Activated T-helper 1 cell treated with anti-CD3 and anti-CD28 coated beads, Interleukin-12 subunit alpha, Interleukin-12 subunit beta, Interleukin-2, Interleukin-4 antibody, amounts not matched to agents 30 ng/mL and 10 ng/mL and 1 ng/mL, durations not matched to agents 14 hours and 24 hours and 36 hours (primary cell): ENCODE measurements at regions of chr3 and their contacts with region 1.

Region 1: GRCh38 chr3:4350789-4351163 is 47.6 kb downstream of the SETMAR start:
- DNase-seq: peak; percentile 37
- H3K4me3 Mint-ChIP-seq: peak overlapping the region; percentile 9
- H3K27ac Mint-ChIP-seq: peak overlapping the region; percentile 31
- H3K4me1 Mint-ChIP-seq: peaks cover 20% of the 10 kb centered on the region
- H3K27me3 Mint-ChIP-seq: peaks cover 4% of the 10 kb centered on the region

Region 2: DNA sequence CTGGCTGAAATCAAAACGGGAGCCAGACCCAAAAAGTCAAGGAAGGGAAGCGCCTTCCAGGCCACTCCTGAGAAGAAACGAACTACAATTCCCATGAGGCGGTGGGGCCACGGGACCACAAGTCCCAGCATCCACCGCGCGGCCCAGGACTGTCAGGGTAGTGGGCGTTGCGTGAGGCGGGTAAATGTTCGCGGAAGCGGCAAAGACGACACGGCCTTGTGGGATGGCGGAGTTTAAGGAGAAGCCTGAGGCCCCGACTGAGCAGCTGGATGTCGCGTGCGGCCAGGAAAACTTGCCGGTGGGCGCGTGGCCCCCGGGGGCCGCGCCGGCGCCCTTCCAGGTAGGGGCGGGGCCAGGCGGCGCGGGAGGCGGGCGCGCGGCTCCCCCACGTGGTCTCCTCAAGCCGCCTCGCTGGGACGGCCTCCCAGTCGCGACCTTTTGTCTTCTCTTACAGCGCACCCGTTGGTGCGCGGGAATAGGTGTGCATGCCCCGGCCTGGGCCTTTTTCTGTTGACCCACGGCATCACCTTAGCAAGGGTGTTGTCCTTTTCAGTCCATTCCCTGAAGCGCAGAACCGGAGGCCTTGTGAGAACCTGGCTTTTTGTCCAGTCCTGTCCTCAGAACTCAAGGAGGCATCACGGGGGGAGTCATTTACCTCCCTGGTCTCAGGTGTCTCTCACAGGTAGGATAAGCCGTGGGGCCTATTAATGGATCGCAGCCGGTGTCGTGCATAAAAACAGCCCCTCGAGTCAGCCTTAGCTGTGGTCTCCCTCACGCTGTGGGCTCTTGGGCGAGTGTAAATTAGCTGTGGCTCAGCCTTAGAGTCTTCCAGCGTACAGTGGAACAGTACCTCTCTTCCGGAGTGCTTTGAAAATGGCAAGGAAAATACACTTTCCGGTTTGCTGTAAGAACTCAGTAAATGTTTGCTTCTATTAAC is 47.3 kb before region 1 on chr3 and contains the start of gene SETMAR:
- intact Hi-C with region 1: loop called (anchors 2 kb)
- DNase-seq: peak; percentile 75
- H3K4me3 Mint-ChIP-seq: peak within 1 kb of the TSS; percentile 93
- H3K27ac Mint-ChIP-seq: peak within 1 kb of the TSS; percentile 99
- H3K4me1 Mint-ChIP-seq: peaks cover 23% of the 10 kb centered on the region
- H3K27me3 Mint-ChIP-seq: no peaks in the 10 kb centered on the region
- total RNA-seq, gene SETMAR: 17.8 and 18.7 TPM in 2 replicates

Region 3: DNA sequence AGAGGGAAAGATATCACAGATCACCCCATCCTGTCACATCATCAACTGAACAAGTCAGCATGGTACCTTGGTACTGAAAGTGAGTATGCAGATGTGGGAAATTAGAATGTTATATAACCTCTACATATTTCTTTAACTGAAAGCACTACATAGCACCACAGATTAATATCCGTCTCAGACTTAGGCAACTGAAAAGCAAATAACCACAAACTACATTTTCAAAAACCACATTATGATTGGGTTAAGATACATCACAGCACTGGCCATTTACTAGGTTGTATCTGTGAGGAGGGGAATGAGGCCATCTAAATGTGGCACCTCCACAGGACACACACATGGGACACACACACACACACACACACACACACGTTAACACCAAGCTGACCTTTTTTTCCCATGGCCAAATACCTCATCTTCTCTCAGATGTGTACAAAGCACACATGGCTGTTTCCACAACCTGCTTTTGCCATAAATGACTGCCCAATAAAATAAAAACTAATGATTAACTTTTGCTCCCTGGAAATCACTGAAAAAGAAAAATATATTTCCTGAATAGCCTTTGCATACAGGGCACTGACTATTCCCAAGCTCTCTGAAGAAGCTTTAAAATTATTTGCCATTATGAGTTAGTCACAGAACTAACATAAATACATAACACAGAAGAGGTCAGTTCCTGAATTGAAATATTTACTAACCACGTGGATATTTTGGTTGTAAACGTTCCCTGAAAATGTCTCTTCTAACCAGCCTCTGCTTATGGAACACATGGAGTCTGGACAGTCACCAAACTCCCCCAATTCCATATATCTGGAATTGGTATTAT is 56.2 kb after region 1 on chr3:
- intact Hi-C with region 1: loop called (anchors 1 kb)
- DNase-seq: no peak
- H3K4me3 Mint-ChIP-seq: no peak overlapping the region
- H3K27ac Mint-ChIP-seq: no peak overlapping the region
- H3K4me1 Mint-ChIP-seq: peaks cover 57% of the 10 kb centered on the region
- H3K27me3 Mint-ChIP-seq: peaks cover 1% of the 10 kb centered on the region

Region 4: DNA sequence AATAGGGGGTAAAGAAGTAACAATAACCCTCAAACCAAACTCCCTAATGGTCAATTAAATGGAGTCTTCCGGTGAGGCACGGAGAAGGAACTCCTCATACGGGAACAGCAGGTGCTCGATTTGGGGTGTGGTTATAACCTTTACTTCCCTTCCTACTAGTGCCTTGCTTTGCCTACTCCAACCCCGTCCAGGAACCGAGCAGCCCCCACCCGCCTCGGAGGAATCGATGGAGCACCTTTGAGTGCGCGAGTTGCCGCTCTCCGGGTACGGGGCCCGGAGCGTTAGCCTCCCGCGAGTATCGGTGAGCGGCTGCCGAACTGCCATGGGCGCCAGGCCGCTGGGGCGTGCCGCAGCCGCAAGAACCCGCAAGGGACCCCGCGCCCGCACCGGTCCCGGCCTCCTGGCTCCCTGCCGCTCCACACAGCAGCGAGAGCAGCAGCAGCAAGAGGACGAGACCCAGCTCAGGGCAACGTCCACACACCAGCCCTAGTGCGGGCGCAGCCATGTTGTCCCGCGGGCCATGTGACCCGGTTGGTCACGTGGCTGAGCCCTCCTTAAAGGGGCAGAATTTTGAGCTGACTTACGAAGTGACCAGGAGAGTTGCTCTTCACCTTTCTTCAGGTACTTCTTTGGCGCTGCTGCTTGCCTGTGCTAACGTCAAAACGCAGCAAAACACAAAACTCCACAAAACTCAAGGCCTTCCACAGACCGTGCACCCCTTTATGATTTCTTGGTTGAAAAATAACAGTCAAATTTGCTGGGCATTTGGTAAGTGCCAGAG is 116.2 kb after region 1 on chr3 and contains the start of gene SUMF1:
- intact Hi-C with region 1: loop called (anchors 1 kb)
- DNase-seq: peak; percentile 68
- H3K4me3 Mint-ChIP-seq: peak within 1 kb of the TSS; percentile 95
- H3K27ac Mint-ChIP-seq: peak within 1 kb of the TSS; percentile 91
- H3K4me1 Mint-ChIP-seq: peaks cover 15% of the 10 kb centered on the region
- H3K27me3 Mint-ChIP-seq: peaks cover 2% of the 10 kb centered on the region
- total RNA-seq, gene SUMF1: 6.1 and 7.0 TPM in 2 replicates

Region 5: GRCh38 chr3:4584456-4585249 is 233.9 kb after region 1 on chr3:
- intact Hi-C with region 1: loop called (anchors 1 kb)
- DNase-seq: no peak
- H3K4me3 Mint-ChIP-seq: peak overlapping the region; percentile 74
- H3K27ac Mint-ChIP-seq: peak overlapping the region; percentile 42
- H3K4me1 Mint-ChIP-seq: peaks cover 41% of the 10 kb centered on the region
- H3K27me3 Mint-ChIP-seq: no peaks in the 10 kb centered on the region

Region 6: GRCh38 chr3:5057857-5058324 is 707.1 kb after region 1 on chr3:
- intact Hi-C with region 1: loop called (anchors 5 kb)
- DNase-seq: peak; percentile 69
- H3K4me3 Mint-ChIP-seq: peak overlapping the region; percentile 23
- H3K27ac Mint-ChIP-seq: peak overlapping the region; percentile 53
- H3K4me1 Mint-ChIP-seq: peaks cover 52% of the 10 kb centered on the region
- H3K27me3 Mint-ChIP-seq: no peaks in the 10 kb centered on the region